HEK293 (cell line): ENCODE measurements at regions of chr16 and their contacts with region 1.

Region 1: DNA sequence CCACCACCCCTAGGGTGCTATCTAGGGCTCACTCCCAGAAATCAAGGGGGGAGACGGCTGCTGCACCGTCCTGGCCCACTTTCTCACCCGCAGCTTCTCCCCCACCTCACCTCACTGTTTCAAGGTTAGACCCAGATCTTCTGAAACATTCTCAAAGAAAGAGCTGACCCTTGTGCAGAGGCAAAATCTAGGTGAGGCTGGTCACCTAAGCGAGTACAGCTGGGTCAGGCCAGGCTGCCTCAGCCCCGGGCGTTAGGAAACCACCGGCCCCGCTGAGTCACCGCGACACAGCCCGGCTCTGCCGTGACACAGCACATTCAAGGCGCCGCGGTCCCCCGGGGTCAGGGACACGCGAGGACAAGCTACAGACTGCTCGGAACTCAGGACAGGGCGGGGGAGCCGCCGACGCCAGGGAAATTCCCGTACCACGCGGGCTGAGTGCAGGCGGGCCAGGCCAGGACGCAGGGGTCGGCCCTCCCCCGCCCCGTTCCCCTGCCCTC is 27.1 kb downstream of the GNPTG start:
- H3K4me3 ChIP-seq: peak overlapping the region; percentile 45
- H3K27ac ChIP-seq: peak overlapping the region; percentile 72; the same call in 1 of the 2 replicates
- H3K4me1 ChIP-seq: 0 out of 2 replicates have a peak, but pooled peaks cover 3% of the 10 kb centered on the region
- CTCF ChIP-seq: no peak

Region 2: DNA sequence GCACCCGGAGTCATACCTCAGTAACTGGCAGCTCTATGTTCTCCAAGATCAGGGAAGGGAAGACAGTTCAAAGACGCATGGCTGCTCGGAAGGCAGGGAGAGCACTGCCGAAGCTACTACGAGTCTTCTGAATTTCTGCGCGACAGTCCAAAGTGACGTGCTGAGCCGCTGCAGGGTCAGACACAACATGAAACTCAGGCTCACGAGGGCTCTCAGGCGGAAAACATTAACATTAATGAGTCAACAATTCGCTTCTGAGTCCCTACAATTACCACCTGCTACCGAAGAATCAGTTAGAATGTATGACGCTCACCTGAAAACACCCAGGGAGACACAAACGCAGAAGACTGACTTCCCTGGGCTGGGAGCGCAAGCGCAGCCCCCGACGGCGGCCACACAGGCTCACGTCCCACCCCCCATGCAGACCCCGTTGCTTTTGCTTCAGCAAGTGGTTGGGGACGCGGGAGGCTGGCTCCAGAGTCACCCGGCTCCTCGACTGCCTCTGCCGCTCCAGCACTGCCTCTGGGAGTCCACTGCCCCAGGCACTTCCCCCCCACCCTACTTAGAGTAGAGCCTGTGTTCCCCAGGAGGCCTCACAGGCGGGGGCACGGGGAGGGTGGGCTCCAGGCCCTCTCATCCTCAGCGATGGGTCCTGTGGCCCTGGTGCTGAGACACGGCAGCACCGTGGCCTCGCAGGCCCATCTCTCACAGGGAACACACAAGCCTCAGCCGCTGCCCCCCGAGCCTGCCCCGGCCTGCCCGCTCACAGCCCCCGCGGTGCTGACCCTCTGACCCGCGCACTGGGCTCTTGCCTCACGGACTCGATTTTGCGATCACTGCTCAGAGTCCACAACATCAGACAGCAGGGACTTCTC is 447.0 kb before region 1 on chr16:
- CTCF ChIA-PET with region 1: no interaction called
- POLR2A ChIA-PET with region 1: no interaction called
- H3K4me3 ChIP-seq: no peak overlapping the region
- H3K27ac ChIP-seq: no peak overlapping the region
- H3K4me1 ChIP-seq: no peaks in the 10 kb centered on the region
- CTCF ChIP-seq: no peak

Region 3: DNA sequence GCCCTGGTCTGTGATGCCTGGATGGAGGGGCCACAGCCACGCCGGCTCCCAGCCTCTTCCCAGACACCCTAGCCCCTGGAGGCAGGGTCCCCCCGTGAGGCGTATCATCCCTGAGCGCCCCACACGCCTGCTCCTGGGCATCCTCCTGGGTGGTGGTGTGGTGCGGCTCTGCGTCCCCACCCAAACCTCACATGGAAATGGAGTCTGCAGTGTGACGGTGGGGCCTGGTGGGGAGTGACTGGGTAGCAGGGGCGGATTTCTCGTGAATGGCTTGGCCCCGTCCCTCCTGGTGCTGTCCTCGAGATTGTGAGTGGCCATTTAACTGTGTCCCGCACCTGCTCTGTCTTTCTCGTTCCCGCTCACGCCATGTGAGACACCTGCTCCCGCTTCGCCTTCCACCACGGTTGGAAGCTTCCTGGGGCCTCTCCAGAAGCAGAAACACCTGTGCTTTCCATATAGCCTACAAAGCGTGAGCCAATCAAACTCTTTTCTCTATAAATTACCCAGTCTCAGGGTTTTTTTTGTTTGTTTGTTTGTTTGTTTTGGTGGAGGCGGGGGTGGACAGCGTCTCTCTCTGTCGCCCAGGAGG is 312.2 kb before region 1 on chr16:
- CTCF ChIA-PET with region 1: no interaction called
- POLR2A ChIA-PET with region 1: no interaction called
- H3K4me3 ChIP-seq: no peak overlapping the region
- H3K27ac ChIP-seq: no peak overlapping the region
- H3K4me1 ChIP-seq: no peaks in the 10 kb centered on the region; the same call in 1 of the 2 replicates
- CTCF ChIP-seq: no peak

Region 4: GRCh38 chr16:1363501-1364041 is 15.3 kb before region 1 on chr16:
- CTCF ChIA-PET with region 1: interaction called, 30 read pairs
- POLR2A ChIA-PET with region 1: interaction called, 14 read pairs
- H3K4me3 ChIP-seq: no peak overlapping the region
- H3K27ac ChIP-seq: no peak overlapping the region
- H3K4me1 ChIP-seq: no peaks in the 10 kb centered on the region
- CTCF ChIP-seq: peak; percentile 88

Region 5: DNA sequence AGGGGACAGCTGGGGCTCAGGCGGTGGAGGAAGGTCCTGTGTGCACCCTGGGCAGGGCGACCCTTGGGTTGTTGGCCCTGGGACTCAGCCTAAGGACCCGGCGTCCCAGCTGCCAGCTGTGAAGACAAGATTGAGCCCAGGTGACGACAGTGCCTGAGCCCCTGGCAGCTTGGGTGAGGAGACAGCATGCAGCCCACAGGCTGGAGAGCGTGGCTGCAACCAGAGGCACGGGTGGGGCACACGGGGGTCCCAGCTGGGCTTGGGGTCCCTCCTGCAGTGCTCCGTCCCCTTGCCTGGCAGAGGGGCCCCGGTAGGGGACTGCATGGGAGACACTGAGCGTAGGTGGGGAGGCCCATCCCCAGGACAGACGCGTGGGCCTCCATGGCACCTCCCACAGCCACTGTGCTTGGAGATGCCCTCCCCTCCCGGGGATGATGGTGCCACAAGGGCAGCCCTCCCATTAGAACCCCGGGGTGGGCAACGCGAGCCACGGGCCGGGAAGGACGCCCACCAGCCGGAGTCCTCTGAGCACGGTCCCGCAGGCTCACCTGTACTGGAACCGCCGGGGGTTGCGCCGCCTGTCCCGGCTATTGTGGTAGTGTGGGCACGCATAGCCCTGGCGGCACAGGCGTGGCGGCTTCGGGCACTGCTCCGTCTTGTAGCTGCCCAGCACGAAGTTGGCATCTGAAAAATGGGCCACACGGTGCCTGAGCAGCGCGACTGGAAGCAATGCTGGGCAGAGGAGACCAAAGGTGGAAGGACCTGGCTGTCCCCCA is 20.2 kb after region 1 on chr16:
- CTCF ChIA-PET with region 1: interaction called, 3 read pairs
- POLR2A ChIA-PET with region 1: interaction called, 10 read pairs
- H3K4me3 ChIP-seq: no peak overlapping the region
- H3K27ac ChIP-seq: no peak overlapping the region
- H3K4me1 ChIP-seq: no peaks in the 10 kb centered on the region
- CTCF ChIP-seq: no peak